ENCODE measurements at regions of chr5 and their contacts with region 1.

Region 1: GRCh38 chr5:132386644-132387286 is 17.3 kb downstream of the SLC22A5 start:
- DNase-seq: peak; percentile 80 to 81
- ATAC-seq: peak; percentile 66 to 82
- H3K4me3 ChIP-seq: no peak overlapping the region
- H3K27ac ChIP-seq: peak overlapping the region; percentile 92 to 94
- H3K4me1 ChIP-seq: peaks cover 66% of the 10 kb centered on the region
- CTCF ChIP-seq: peak; percentile 91
- EP300 ChIP-seq: no peak
- POLR2A ChIP-seq: no peak
- RAD21 ChIP-seq: peak; percentile 96

Region 2: DNA sequence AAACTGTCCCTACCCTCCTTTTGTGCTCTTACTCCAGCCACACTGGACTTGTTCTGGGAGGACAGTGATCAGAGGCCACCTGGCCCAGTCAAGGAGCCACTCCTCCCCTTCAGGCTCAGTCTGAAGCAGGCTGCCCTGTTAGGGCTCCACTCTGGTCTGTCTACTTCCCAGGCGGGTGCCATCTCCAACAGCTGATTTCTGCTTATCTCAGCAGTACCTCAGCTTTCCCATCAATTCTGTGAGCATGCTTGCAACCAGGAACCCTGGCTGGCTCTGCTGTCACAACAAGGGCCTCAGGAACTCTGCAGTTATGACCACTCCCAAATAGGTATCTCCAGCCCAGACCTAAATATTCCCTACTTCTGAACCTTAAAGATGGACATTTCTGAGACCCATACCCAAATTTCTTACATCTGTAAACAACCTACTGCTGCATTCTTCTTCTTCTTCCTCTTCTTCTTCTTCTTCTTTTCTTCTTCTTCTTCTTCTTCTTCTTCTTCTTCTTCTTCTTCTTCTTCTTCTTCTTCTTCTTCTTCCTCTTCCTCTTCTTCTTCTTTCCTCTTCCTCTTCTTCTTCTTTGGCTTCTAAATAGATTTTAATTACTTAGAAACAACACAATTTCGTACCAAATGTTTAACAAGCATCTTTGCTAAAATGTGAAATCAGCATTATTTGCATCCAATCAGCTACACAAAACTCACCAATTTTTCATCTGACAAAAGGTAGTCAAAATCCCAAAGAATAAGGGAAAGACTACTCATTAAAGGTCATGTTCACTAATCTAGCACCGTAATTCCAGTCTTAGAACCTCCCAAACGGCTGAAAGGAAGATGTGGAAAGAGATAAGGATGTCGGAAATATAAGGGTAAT is 106.2 kb before region 1 on chr5:
- CTCF ChIA-PET with region 1: no interaction called
- POLR2A ChIA-PET with region 1: no interaction called
- DNase-seq: no peak
- ATAC-seq: no peak
- H3K4me3 ChIP-seq: no peak overlapping the region
- H3K27ac ChIP-seq: no peak overlapping the region
- H3K4me1 ChIP-seq: no peaks in the 10 kb centered on the region
- CTCF ChIP-seq: no peak
- EP300 ChIP-seq: no peak
- POLR2A ChIP-seq: no peak
- RAD21 ChIP-seq: no peak

Region 3: DNA sequence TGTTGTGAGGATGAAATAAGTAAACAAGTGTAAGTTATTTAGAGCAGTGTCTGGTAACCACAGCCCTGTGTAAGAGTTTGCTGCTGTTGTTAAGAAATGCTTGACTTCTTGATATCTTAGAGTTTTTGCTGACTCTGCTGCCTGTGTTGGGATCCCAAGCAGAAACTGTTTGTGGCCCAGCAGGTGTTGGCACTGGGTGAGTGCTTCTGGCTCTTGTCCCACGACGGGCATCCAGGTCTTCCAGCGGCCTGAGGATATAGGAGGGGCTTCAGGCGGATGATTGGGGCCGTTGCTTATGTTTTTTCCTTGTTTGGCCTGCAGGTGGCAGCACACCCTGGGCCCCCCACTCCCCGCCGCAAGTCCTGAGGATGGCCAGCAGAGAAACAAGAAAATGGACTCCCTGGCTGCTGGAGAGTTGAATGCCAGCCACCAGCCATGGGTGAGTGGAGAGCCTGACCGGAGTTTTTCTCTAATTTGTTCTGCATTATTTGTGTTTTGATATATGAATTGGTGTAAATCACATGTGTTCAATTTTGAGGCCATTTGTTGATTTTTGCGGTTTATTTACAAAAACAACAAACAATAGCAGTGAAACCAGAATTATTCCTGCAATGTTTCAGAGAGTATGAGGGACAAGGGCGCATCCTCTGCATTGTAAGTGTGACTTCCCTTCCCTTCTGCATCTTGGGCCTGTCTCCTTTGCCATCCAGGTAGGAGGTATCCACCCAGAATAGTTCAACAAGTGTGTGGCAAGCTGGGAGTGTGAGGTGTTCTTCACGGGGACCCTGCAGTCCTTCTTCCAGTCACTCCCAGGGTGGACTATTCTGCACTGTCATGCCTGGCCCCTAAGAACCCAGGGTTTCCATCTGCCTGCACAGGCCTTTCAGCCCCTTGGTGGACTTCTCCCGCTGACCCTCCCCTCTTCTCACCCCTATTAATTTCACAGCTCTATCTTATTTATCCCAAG is 33.0 kb after region 1 on chr5:
- CTCF ChIA-PET with region 1: interaction called, 28 read pairs
- POLR2A ChIA-PET with region 1: no interaction called
- DNase-seq: peak; percentile 84 to 88
- ATAC-seq: peak; percentile 87 to 96
- H3K4me3 ChIP-seq: no peak overlapping the region
- H3K27ac ChIP-seq: peak overlapping the region; percentile 38 to 77; a peak in 5 of 6 replicates
- H3K4me1 ChIP-seq: peaks cover 33% of the 10 kb centered on the region
- CTCF ChIP-seq: peak; percentile 89
- EP300 ChIP-seq: no peak
- POLR2A ChIP-seq: no peak
- RAD21 ChIP-seq: peak; percentile 79 to 82

Region 4: DNA sequence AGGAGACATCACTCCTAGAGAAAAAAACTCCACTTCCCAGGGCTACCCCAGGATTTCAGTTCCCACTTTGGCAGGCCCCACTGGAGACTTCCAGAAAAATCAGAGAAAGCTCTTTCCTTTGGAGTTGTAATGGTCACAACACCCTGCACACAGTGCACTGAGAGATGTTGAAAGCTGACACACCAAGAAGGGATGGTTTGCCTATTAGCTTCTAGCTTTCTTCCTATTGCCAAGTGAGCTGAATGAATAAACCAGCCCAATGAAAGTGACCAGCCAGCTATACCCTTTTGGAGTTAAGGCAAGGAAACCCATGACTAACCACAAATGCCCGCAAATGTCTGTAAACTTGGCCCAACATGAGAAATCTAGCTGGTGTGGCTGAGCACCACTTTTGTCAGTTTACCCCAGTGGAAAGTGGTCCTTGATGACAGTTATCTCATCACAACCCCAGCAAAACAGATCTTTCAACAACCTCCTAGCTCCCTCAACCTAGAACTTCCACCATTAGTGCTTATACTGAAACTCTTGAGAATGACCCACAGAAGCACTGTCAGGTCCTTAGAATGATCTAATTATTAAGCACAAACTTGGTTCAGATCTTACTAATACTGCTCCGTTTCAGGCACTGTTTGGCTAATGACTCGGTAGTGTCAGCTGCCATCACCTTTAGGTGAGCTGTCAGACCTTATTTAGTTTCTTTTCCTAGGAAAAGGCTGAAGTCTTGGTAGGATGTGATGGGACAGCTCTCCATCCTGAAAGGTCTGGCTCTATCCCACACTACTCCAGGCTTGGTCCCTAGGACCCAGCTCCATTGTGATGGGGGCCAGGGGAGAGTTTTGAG is 92.6 kb after region 1 on chr5:
- CTCF ChIA-PET with region 1: interaction called, 12 read pairs
- POLR2A ChIA-PET with region 1: no interaction called
- DNase-seq: no peak
- ATAC-seq: no peak
- H3K4me3 ChIP-seq: no peak overlapping the region
- H3K27ac ChIP-seq: no peak overlapping the region
- H3K4me1 ChIP-seq: peaks cover 10% of the 10 kb centered on the region
- CTCF ChIP-seq: no peak
- EP300 ChIP-seq: no peak
- POLR2A ChIP-seq: no peak
- RAD21 ChIP-seq: no peak

Region 5: GRCh38 chr5:132495667-132496190 is 109.0 kb after region 1 on chr5:
- CTCF ChIA-PET with region 1: interaction called, 217 read pairs
- POLR2A ChIA-PET with region 1: interaction called, 49 read pairs
- DNase-seq: peak; percentile 82 to 83
- ATAC-seq: peak; percentile 56 to 74
- H3K4me3 ChIP-seq: peak overlapping the region; percentile 56
- H3K27ac ChIP-seq: peak overlapping the region; percentile 88 to 97
- H3K4me1 ChIP-seq: peaks cover 52% of the 10 kb centered on the region
- CTCF ChIP-seq: no peak
- EP300 ChIP-seq: 0 out of 5 replicates have a peak, but pooled peaks of 1 of the 2 experiments have one; percentile 15
- POLR2A ChIP-seq: peak; percentile 24
- RAD21 ChIP-seq: no peak

Region 6: GRCh38 chr5:132526290-132526973 is 139.7 kb after region 1 on chr5:
- CTCF ChIA-PET with region 1: interaction called, 20 read pairs
- POLR2A ChIA-PET with region 1: no interaction called
- DNase-seq: peak; percentile 59 to 69
- ATAC-seq: peak; percentile 83 to 94
- H3K4me3 ChIP-seq: no peak overlapping the region
- H3K27ac ChIP-seq: peak overlapping the region in 1 of 2 experiments; percentile 62; a peak in 1 of 6 replicates
- H3K4me1 ChIP-seq: no peaks in the 10 kb centered on the region
- CTCF ChIP-seq: peak; percentile 98
- EP300 ChIP-seq: no peak
- POLR2A ChIP-seq: no peak
- RAD21 ChIP-seq: peak; percentile 70 to 83

Measured in A549 (cell line).